ENCODE measurements at regions of chr6 and their contacts with region 1.

Region 1: GRCh38 chr6:45156075-45156474 is 172.1 kb upstream of the RUNX2 start:
- DNase-seq: peak in 3 of 14 experiments; percentile 52 to 85 (median 57)
- ATAC-seq: peak; percentile 97
- H3K4me3 ChIP-seq: no peak overlapping the region
- H3K4me3 Mint-ChIP-seq: peak overlapping the region; percentile 64
- H3K27ac ChIP-seq: no peak overlapping the region
- H3K27ac Mint-ChIP-seq: peak overlapping the region; percentile 77
- H3K4me1 ChIP-seq: peaks cover 3% of the 10 kb centered on the region
- H3K4me1 Mint-ChIP-seq: peaks cover 32% of the 10 kb centered on the region
- H3K27me3 ChIP-seq: no peaks in the 10 kb centered on the region
- H3K27me3 Mint-ChIP-seq: no peaks in the 10 kb centered on the region
- CTCF ChIP-seq: no peak

Region 2: GRCh38 chr6:44925100-44925739 is 230.9 kb before region 1 on chr6:
- CTCF ChIA-PET with region 1: no interaction called
- POLR2A ChIA-PET with region 1: no interaction called
- intact Hi-C with region 1: loop called in 1 of 2 experiments (anchors 10 kb)
- DNase-seq: peak in 5 of 14 experiments; percentile 22 to 92 (median 87)
- ATAC-seq: peak; percentile 93
- H3K4me3 ChIP-seq: peak overlapping the region; percentile 0
- H3K4me3 Mint-ChIP-seq: peak overlapping the region; percentile 69
- H3K27ac ChIP-seq: peak overlapping the region in 1 of 2 donors; percentile 56
- H3K27ac Mint-ChIP-seq: peak overlapping the region; percentile 79
- H3K4me1 ChIP-seq: peaks cover 15% of the 10 kb centered on the region
- H3K4me1 Mint-ChIP-seq: peaks cover 51% of the 10 kb centered on the region
- H3K27me3 ChIP-seq: no peaks in the 10 kb centered on the region
- H3K27me3 Mint-ChIP-seq: no peaks in the 10 kb centered on the region
- CTCF ChIP-seq: no peak

Region 3: DNA sequence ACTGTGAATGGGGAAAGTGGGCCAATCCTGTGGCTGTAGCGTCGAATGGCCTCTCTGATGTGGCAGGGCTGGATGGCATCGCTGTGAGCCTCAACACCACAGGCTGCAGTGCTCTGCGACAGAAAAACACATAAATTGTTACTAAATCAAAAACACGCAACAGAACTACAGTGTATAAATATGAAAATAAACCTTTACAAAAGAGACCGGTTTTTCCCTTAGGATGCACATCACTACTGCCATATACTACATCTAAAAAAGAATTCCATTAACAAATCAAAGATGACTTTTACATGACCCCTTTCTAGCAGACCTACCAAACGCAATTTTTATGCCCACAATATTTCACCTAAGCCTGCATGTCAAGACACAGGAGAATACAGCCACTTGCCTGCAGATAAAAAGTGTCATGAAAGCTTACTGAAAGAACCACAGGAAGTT is 223.4 kb before region 1 on chr6:
- CTCF ChIA-PET with region 1: no interaction called
- POLR2A ChIA-PET with region 1: interaction called, 13 read pairs
- intact Hi-C with region 1: loop called in 1 of 2 experiments (anchors 10 kb)
- DNase-seq: peak; percentile 4 to 86 (median 40)
- ATAC-seq: peak; percentile 77
- H3K4me3 ChIP-seq: peak overlapping the region; percentile 42
- H3K4me3 Mint-ChIP-seq: peak overlapping the region; percentile 89
- H3K27ac ChIP-seq: peak overlapping the region; percentile 63 to 64
- H3K27ac Mint-ChIP-seq: peak overlapping the region; percentile 95
- H3K4me1 ChIP-seq: peaks cover 19% of the 10 kb centered on the region
- H3K4me1 Mint-ChIP-seq: peaks cover 65% of the 10 kb centered on the region
- H3K27me3 ChIP-seq: no peaks in the 10 kb centered on the region
- H3K27me3 Mint-ChIP-seq: no peaks in the 10 kb centered on the region
- CTCF ChIP-seq: no peak

Region 4: DNA sequence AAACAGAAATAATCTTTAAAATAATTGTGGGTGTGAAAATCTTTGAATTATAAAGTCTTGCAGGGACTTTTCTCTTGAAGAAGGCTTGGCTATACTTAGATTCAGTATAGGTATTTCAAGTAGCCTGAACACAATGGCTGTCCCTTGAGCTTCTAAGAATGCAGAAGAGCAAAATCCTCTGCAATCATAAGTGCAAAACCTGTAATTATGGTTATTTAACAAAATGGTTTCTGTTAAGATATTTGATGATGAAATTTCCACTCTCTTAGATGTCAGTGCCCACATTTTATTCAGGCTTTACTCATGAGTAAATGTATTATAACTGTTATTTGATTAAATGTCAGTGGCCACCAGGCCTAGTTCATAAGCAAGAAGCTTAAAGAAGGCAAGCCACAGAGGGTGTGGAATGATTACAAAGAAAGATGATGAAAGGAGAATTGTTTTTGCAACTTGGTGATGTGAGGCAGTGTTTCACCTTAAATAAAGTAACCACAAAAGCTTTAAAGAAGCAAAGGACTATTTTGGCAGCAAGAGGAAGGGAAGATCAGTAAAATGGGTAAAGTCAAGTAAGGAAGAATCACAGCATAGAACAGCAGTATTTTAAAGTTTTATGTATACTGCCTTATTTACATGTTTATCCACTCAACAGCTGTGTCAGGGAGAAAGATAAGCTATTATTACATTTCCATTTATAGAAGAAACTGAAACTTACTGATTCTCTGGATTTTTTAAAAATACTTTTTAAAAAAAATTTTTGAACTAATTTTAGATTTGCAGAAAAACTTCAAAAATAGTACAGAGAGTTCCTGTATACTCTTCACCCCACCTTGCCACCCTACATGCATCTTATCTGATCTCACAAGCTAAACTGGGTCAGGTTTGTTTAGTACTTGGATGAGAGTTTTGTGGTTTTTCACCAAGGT is 179.1 kb before region 1 on chr6:
- CTCF ChIA-PET with region 1: no interaction called
- POLR2A ChIA-PET with region 1: interaction called, 19 read pairs
- intact Hi-C with region 1: loop called in 1 of 2 experiments (anchors 5 kb)
- DNase-seq: peak in 5 of 14 experiments; percentile 10 to 78 (median 65)
- ATAC-seq: peak; percentile 90
- H3K4me3 ChIP-seq: no peak overlapping the region
- H3K4me3 Mint-ChIP-seq: peak overlapping the region; percentile 43
- H3K27ac ChIP-seq: peak overlapping the region in 1 of 2 donors; percentile 47
- H3K27ac Mint-ChIP-seq: peak overlapping the region; percentile 77
- H3K4me1 ChIP-seq: peaks cover 6% of the 10 kb centered on the region
- H3K4me1 Mint-ChIP-seq: peaks cover 78% of the 10 kb centered on the region
- H3K27me3 ChIP-seq: no peaks in the 10 kb centered on the region
- H3K27me3 Mint-ChIP-seq: no peaks in the 10 kb centered on the region
- CTCF ChIP-seq: no peak

Region 5: DNA sequence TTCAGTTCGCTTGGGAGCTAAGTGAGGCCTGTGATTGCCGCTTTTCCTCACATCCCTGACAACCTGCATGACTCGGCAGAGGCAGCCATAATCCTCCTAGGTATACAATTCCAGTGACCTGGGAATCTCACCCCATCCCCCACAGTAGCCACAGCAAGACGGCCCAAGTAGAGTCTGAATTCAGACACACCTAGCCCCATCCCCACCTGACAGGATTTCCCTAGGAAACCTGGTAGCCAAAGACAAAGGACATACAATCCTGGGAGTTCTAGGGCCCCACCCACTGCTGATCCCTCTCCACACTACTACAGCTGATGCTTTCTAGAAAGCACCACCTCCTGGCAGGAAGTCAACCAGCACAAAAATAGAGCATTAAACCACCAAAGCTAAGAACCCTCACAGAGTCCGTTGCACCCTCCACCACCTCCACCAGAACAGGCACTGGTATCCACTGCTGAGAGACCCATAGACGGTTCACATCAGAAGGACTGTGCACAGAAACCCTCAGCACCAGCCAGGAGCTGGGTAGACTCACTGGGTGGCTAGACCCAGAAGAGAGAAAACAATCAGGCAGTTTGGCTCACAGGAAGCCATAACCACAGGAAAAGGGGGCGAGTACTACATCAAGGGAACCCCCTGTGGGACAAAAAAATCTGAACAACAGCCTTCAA is 154.2 kb after region 1 on chr6:
- CTCF ChIA-PET with region 1: no interaction called
- POLR2A ChIA-PET with region 1: interaction called, 6 read pairs
- intact Hi-C with region 1: loop called in 1 of 2 experiments (anchors 10 kb)
- DNase-seq: peak in 12 of 14 experiments; percentile 1 to 74 (median 26)
- ATAC-seq: peak; percentile 83
- H3K4me3 ChIP-seq: no peak overlapping the region
- H3K4me3 Mint-ChIP-seq: peak overlapping the region; percentile 32
- H3K27ac ChIP-seq: peak overlapping the region; percentile 40 to 44
- H3K27ac Mint-ChIP-seq: peak overlapping the region; percentile 74
- H3K4me1 ChIP-seq: peaks cover 12% of the 10 kb centered on the region
- H3K4me1 Mint-ChIP-seq: peaks cover 63% of the 10 kb centered on the region
- H3K27me3 ChIP-seq: no peaks in the 10 kb centered on the region
- H3K27me3 Mint-ChIP-seq: no peaks in the 10 kb centered on the region
- CTCF ChIP-seq: no peak

Measured in CD4-positive, alpha-beta T cell (primary cell).